ENCODE measurements at regions of chr17 and their contacts with region 1.

Region 1: DNA sequence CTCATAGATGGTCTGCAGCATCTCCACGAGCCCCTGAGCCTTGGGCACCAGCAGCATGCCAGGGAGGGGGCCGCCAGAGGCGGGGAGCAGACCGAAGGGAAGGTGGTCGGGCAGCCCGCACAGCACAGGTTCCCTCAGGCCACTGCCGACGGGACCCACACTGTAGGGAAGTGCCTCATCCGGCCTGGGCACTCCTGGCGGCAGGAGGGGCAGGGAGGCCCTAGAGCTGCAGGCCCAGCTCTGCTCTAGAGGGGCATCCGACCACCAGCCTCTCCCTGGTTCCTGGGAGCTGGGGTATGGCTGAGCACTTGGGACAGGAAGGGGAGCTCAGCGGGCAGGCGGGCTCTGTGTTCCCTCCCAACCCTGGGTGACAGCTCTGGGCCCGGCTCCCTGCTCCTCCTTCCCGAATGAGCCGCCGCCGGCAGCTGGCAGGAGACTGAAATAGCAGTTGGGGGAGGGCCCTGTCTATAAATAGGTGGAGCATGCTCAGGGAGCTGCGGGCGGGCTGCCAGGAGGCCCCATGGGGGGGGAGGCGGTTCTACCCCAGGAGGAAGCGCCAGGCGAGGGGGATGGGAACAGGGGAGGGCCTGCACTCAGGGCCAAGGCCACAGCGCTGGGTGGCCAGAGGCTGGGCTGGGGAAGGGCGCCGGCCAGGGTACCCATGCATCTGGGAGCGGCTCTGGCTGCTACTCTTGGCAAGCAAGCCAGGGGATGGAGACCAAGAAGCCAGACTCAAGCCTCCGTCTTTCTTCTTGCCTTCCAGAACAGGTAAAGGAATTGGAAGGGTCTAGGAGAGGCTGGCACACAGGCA is 12.4 kb downstream of the HDAC5 start:
- DNase-seq: peak; percentile 87
- H3K4me3 ChIP-seq: peak overlapping the region in 2 of 3 experiments; percentile 10 to 40
- H3K27ac ChIP-seq: no peak overlapping the region
- H3K4me1 ChIP-seq: peaks cover 14% of the 10 kb centered on the region
- H3K27me3 ChIP-seq: no peaks in the 10 kb centered on the region
- CTCF ChIP-seq: no peak
- POLR2A ChIP-seq: no peak

Region 2: GRCh38 chr17:44044067-44044466 is 67.0 kb before region 1 on chr17:
- CTCF ChIA-PET with region 1: interaction called, 34 read pairs
- POLR2A ChIA-PET with region 1: no interaction called
- dilution Hi-C with region 1: no loop called
- intact Hi-C with region 1: loop called (anchors 1 kb)
- DNase-seq: peak; percentile 11
- H3K4me3 ChIP-seq: no peak overlapping the region
- H3K27ac ChIP-seq: no peak overlapping the region
- H3K4me1 ChIP-seq: peaks cover 9% of the 10 kb centered on the region
- H3K27me3 ChIP-seq: no peaks in the 10 kb centered on the region
- CTCF ChIP-seq: no peak
- POLR2A ChIP-seq: no peak

Region 3: DNA sequence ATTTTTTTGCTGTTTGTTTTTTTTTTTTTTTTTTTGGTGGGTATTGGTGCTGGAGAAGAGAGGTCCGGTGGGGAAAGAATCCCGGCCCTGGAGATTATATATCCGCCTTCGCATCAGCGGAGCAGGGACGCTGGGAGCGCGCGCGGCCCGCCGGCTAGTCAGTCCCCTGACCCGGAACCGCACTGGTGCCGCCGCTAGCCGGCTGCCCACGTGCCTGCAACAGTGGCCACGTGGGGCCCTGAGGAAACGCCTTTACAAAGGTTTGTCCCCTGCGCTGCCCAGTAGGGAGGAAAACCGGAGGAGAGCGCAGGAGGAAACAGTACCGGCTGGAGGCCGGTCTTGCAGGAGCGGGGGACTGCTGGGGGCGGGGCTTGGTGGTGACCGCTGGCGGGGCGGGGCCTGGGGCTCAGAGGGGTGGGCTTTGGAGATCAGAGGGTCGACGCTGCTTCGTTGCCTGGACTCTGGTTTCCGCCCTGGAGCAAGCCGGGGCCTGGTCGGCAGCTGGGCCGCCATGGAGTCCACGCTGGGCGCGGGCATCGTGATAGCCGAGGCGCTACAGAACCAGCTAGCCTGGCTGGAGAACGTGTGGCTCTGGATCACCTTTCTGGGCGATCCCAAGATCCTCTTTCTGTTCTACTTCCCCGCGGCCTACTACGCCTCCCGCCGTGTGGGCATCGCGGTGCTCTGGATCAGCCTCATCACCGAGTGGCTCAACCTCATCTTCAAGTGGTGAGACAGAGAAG is 40.4 kb before region 1 on chr17 and contains the start of gene G6PC3:
- CTCF ChIA-PET with region 1: interaction called, 7 read pairs
- POLR2A ChIA-PET with region 1: interaction called, 7 read pairs
- dilution Hi-C with region 1: no loop called
- intact Hi-C with region 1: loop called (anchors 1 kb)
- DNase-seq: peak; percentile 98
- H3K4me3 ChIP-seq: peak within 1 kb of the TSS; percentile 42 to 81 (median 43)
- H3K27ac ChIP-seq: peak within 1 kb of the TSS; percentile 54
- H3K4me1 ChIP-seq: peaks cover 20% of the 10 kb centered on the region
- H3K27me3 ChIP-seq: no peaks in the 10 kb centered on the region
- CTCF ChIP-seq: no peak
- POLR2A ChIP-seq: peak; percentile 96
- total RNA-seq, gene G6PC3: 74.1 and 78.4 TPM in 2 replicates

Region 4: GRCh38 chr17:44095642-44096496 is 15.2 kb before region 1 on chr17:
- CTCF ChIA-PET with region 1: interaction called, 30 read pairs
- POLR2A ChIA-PET with region 1: interaction called, 3 read pairs
- dilution Hi-C with region 1: no loop called
- intact Hi-C with region 1: loop called (anchors 1 kb)
- DNase-seq: peak; percentile 97
- H3K4me3 ChIP-seq: peak overlapping the region in 2 of 3 experiments; percentile 10 to 19
- H3K27ac ChIP-seq: peak overlapping the region; percentile 83
- H3K4me1 ChIP-seq: peaks cover 23% of the 10 kb centered on the region
- H3K27me3 ChIP-seq: no peaks in the 10 kb centered on the region
- CTCF ChIP-seq: no peak
- POLR2A ChIP-seq: peak; percentile 92

Region 5: DNA sequence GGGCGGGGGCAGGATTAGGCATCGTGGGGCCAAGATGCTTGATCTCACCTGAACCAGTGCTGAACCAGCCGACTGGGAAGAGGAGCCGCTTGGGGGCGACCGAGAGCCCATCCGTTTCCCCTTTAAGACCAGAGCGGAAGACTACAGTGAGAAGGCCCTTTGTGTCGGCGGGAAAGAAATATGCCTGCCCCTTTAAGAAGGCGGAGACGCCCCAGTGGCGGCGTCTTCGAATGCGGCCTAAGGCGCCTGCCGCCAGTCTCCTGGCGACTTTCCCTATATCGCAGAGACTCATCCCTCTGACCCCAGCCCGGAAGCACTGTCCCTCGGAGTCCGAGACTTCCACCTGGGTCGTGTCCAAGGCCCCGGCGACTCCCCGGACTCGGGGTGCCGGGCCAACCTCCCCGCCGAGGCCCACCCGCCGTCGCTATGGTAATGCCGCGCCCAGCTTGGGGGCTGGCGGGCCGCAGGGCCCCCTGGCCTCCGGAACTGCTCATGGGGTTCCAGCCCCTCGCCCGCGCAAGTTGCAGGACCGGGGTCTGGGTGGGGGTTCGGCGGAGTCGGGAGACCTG is 30.8 kb after region 1 on chr17 and contains the start of gene HROB:
- CTCF ChIA-PET with region 1: no interaction called
- POLR2A ChIA-PET with region 1: no interaction called
- dilution Hi-C with region 1: no loop called
- intact Hi-C with region 1: loop called (anchors 1 kb)
- DNase-seq: peak; percentile 94
- H3K4me3 ChIP-seq: peak within 1 kb of the TSS; percentile 81 to 98 (median 88)
- H3K27ac ChIP-seq: peak within 1 kb of the TSS; percentile 93
- H3K4me1 ChIP-seq: peaks cover 20% of the 10 kb centered on the region
- H3K27me3 ChIP-seq: no peaks in the 10 kb centered on the region
- CTCF ChIP-seq: peak; percentile 87 to 97
- POLR2A ChIP-seq: no peak
- total RNA-seq, gene HROB: 9.0 and 10.1 TPM in 2 replicates

Measured in endothelial cell of umbilical vein (primary cell).